CD8-positive, alpha-beta memory T cell (primary cell): ENCODE measurements at regions of chr4 and their contacts with region 1.

Region 1: DNA sequence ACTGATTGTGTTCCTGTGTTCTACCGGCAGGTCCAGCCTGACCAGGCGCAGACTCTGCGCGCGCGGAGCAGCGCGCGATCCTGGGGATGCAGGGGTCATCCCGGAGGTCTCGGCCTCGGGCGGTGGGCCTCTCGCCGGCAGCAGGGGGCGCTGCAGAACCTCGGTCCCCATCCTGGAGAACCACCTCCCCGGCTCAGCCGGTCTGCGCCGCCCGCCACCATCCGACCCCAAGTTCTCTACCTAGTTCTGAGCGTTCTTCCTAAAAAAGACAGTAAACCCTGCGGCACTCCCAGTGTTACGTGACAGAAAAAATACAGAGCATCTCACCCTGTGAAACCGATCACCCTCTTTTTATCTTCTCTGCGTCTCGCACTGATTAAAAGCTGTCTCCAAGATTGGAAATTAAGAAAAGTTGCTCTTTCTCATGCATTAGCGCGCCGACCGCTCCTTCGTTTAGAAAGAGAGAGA is 1.6 kb downstream of the TRPC3 start:
- DNase-seq: peak; percentile 68 to 86 (median 75)
- H3K4me3 ChIP-seq: peak overlapping the region; percentile 69
- H3K4me3 Mint-ChIP-seq: peak overlapping the region; percentile 89 to 95 (median 92)
- H3K27ac ChIP-seq: peak overlapping the region; percentile 45
- H3K27ac Mint-ChIP-seq: peak overlapping the region in 6 of 8 donors; percentile 3 to 93 (median 48)
- H3K4me1 ChIP-seq: no peaks in the 10 kb centered on the region
- H3K4me1 Mint-ChIP-seq: peaks cover 4 to 16% (median 12%) of the 10 kb centered on the region in 3 donors
- H3K27me3 ChIP-seq: no peaks in the 10 kb centered on the region
- H3K27me3 Mint-ChIP-seq: peaks cover 1 to 31% of the 10 kb centered on the region in 2 donors

Region 2: DNA sequence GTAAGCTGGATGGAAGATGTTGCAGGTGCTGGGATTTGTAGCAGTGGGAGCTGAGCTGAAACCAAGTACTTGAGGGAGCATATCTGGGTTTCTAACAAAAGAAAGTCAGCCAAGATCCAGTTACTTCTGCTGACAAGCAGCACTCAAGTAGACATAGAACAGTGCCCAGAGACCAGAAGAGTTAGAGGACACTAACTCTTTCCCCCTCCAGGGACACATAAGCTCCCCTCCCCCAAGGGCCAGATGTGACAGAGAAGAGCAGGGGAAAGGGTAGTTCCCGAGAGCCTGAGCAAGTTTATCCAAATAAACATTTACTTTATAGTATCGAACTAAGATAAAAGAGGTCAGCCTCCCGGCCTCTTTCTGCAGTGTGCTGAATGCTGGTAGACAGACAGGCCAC is 10.6 kb before region 1 on chr4:
- CTCF ChIA-PET with region 1: interaction called, 18 read pairs
- POLR2A ChIA-PET with region 1: no interaction called
- DNase-seq: no peak
- H3K4me3 ChIP-seq: no peak overlapping the region
- H3K4me3 Mint-ChIP-seq: no peak overlapping the region
- H3K27ac ChIP-seq: no peak overlapping the region
- H3K27ac Mint-ChIP-seq: peak overlapping the region in 2 of 8 donors; percentile 33 to 66
- H3K4me1 ChIP-seq: peaks cover 5% of the 10 kb centered on the region
- H3K4me1 Mint-ChIP-seq: peaks cover 14 to 18% (median 17%) of the 10 kb centered on the region in 3 donors
- H3K27me3 ChIP-seq: peaks cover 4% of the 10 kb centered on the region
- H3K27me3 Mint-ChIP-seq: peaks cover 2 to 44% of the 10 kb centered on the region in 2 donors